CD4-positive, alpha-beta T cell (primary cell): ENCODE measurements at regions of chr5 and their contacts with region 1.

Region 1: DNA sequence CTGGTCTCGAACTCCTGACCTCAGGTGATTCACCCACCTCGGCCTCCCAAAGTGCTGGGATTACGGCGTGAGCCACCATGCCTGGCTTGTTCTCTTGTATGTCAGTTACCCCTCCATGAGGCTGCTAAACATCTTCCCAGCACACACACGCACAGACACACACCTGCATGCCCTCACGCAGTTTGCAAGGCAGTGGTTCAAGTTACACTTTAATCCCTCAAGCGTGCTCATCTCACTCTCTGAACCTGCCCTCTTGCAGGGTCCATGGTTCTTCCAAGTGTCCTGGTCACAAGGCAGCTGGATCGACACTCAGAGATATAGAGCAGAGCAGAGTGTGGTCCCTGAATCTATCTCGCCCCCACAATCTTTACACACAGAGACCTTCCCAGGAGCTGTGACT is 34.1 kb upstream of the RUFY1 start:
- DNase-seq: no peak
- ATAC-seq: no peak
- H3K4me3 ChIP-seq: no peak overlapping the region
- H3K4me3 Mint-ChIP-seq: no peak overlapping the region
- H3K27ac ChIP-seq: no peak overlapping the region
- H3K27ac Mint-ChIP-seq: no peak overlapping the region
- H3K4me1 ChIP-seq: no peaks in the 10 kb centered on the region
- H3K4me1 Mint-ChIP-seq: no peaks in the 10 kb centered on the region
- H3K27me3 ChIP-seq: no peaks in the 10 kb centered on the region
- H3K27me3 Mint-ChIP-seq: peaks cover 11% of the 10 kb centered on the region
- CTCF ChIP-seq: no peak

Region 2: GRCh38 chr5:177958696-177959095 is 1557.5 kb before region 1 on chr5:
- CTCF ChIA-PET with region 1: no interaction called
- POLR2A ChIA-PET with region 1: no interaction called
- intact Hi-C with region 1: loop called in 1 of 2 experiments (anchors 10 kb)
- DNase-seq: no peak
- ATAC-seq: no peak
- H3K4me3 ChIP-seq: no peak overlapping the region
- H3K4me3 Mint-ChIP-seq: no peak overlapping the region
- H3K27ac ChIP-seq: no peak overlapping the region
- H3K27ac Mint-ChIP-seq: no peak overlapping the region
- H3K4me1 ChIP-seq: no peaks in the 10 kb centered on the region
- H3K4me1 Mint-ChIP-seq: no peaks in the 10 kb centered on the region
- H3K27me3 ChIP-seq: no peaks in the 10 kb centered on the region
- H3K27me3 Mint-ChIP-seq: no peaks in the 10 kb centered on the region
- CTCF ChIP-seq: no peak

Region 3: DNA sequence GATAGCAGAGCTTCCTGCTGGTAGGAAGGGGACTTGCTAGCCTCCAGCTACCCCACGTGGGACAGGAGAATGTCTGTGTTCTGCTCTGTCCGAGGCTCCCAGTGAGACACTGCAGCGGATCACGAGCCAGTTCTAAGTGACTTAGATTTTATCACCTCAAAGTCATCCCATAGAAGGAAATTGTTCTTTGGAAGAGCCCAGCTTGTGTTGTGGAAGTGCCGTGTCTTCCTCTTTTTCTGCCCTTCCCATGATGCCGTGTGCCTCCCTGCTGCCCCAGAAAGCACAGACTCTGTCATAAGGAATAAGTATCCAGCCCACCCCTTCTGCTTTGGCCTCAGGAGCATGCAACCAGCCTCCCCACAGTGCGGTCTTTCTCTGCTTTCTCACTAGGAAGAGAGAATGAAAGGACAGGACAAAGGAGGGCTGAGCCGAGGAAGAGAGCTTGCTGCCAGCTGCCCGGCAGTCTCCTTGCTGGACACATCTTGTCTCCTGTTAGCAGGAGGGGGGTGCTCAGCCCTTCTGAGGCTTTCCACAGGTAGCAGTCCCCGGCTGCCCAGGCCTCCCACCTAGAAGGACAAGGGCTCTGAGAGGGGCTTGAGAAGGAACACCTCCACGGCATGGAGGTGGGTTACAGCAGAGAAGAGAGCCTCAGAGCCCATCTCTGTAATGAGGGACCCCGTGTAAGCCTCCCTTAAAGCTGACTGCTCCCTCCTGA is 69.9 kb after region 1 on chr5:
- CTCF ChIA-PET with region 1: no interaction called
- POLR2A ChIA-PET with region 1: no interaction called
- intact Hi-C with region 1: loop called in 1 of 2 experiments (anchors 5 kb)
- DNase-seq: no peak
- ATAC-seq: no peak
- H3K4me3 ChIP-seq: no peak overlapping the region
- H3K4me3 Mint-ChIP-seq: no peak overlapping the region
- H3K27ac ChIP-seq: no peak overlapping the region
- H3K27ac Mint-ChIP-seq: no peak overlapping the region
- H3K4me1 ChIP-seq: no peaks in the 10 kb centered on the region
- H3K4me1 Mint-ChIP-seq: no peaks in the 10 kb centered on the region
- H3K27me3 ChIP-seq: no peaks in the 10 kb centered on the region
- H3K27me3 Mint-ChIP-seq: no peaks in the 10 kb centered on the region
- CTCF ChIP-seq: no peak

Region 4: DNA sequence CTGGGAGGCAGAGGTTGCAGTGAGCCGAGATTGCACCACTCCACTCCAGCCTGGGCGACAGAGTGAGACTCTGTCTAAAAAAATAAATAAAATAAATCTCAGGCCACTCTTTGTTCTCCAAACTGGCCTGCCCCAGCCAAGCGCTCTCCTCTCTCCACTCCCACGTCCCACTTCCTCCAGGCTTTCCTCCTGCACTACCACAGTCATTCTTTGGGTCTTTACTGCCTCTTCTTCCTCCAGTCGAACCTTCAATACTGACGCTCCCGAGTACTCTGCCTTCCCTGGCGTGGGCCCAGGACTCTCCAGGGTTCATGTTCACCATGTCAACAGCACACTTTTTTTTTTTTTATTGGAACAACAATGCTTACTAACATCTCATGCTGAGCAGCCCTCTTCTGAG is 531.4 kb after region 1 on chr5:
- CTCF ChIA-PET with region 1: no interaction called
- POLR2A ChIA-PET with region 1: no interaction called
- intact Hi-C with region 1: no loop called
- DNase-seq: no peak
- ATAC-seq: no peak
- H3K4me3 ChIP-seq: no peak overlapping the region
- H3K4me3 Mint-ChIP-seq: no peak overlapping the region
- H3K27ac ChIP-seq: no peak overlapping the region
- H3K27ac Mint-ChIP-seq: no peak overlapping the region
- H3K4me1 ChIP-seq: no peaks in the 10 kb centered on the region
- H3K4me1 Mint-ChIP-seq: no peaks in the 10 kb centered on the region
- H3K27me3 ChIP-seq: no peaks in the 10 kb centered on the region
- H3K27me3 Mint-ChIP-seq: no peaks in the 10 kb centered on the region
- CTCF ChIP-seq: no peak